ENCODE measurements at regions of chr5 and their contacts with region 1.

Region 1: DNA sequence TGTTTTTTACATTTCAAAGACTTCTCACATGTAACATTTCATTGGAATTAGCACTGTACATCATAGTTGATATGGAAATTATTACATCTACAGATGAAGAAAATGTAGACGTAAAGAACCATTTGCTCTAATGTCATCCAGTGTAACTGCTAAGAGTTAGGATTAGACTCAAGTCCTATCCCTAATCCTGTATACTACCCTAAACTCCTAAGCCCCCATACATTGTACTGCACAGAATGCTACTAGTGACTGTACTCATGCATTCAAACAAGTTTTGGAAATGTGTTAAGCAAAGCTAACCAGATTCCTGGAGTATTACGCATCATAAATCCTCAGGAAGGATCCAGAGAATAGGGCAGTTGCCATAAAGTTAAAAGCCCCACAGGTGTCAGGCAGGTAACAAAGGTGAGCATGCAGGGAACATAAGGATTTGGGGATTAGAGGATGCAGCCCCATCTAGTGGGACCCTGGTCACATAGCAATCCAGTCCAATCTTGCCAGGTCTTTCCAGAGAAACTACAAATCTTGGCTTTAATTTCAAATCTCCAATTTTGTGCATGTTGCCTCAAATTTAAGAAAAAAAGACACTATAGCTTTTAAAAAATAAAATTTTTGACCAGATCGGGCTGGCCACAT is 32.0 kb downstream of the HAVCR1 start:
- DNase-seq: peak; percentile 33 to 39
- H3K4me3 ChIP-seq: no peak overlapping the region
- H3K27ac ChIP-seq: no peak overlapping the region
- H3K4me1 ChIP-seq: no peaks in the 10 kb centered on the region
- H3K27me3 ChIP-seq: peaks cover 15% of the 10 kb centered on the region
- CTCF ChIP-seq: peak; percentile 72

Region 2: DNA sequence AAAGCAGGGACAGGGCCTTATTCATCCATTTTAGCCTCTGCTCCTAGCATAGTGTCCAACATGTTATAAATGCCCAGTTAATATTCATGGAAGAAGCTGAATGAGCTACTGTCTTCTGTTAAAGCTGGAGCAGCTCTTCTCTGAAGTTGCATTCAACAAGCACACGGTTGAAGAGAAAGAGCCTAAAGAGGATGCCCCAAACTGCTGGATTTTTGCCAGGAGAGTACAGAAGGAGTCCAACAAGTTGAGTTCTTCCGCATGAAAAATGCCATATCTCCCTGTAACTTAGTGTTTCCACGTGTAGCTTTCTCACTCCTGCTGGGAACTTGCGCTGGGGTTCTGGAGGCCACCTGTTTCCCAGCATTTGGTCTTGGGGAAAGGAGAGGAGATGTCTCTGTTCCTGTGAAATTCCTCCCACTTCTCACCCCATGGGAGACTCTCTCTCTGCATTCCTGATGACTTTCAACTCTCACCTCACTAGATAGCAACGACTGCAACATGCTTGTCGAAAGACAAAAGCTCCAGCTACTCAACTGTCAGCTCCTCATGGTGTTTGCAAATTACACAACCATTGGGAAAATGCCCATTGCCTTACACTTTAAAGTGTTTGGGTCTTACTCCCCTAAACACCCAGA is 1890.6 kb before region 1 on chr5:
- CTCF ChIA-PET with region 1: no interaction called
- POLR2A ChIA-PET with region 1: no interaction called
- intact Hi-C with region 1: loop called (anchors 5 kb)
- DNase-seq: no peak
- H3K4me3 ChIP-seq: no peak overlapping the region
- H3K27ac ChIP-seq: no peak overlapping the region
- H3K4me1 ChIP-seq: no peaks in the 10 kb centered on the region
- H3K27me3 ChIP-seq: peaks cover 8% of the 10 kb centered on the region
- CTCF ChIP-seq: no peak

Region 3: DNA sequence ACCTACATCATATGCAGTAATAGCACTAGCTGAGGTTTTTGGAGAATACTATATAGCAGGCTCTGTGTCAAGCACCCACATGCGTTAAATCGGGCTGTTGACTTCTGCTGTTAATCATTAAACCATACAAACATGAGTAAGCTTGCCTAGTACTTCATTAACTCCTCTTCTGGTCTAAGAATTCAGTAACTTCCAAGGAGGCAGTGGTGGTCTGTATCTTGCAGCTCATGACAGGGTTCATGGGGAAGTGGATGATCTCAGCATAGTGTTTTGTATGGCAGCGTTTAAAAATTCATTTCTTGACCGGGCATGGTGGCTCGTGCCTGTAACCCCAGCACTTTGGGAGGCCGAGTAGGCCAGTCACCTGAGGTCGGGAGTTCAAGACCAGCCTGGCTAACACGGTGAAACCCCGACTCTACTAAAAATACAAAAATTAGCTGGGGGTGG is 32.2 kb after region 1 on chr5 and contains the start of gene HAVCR1:
- CTCF ChIA-PET with region 1: no interaction called
- POLR2A ChIA-PET with region 1: no interaction called
- intact Hi-C with region 1: no loop called
- DNase-seq: no peak
- H3K4me3 ChIP-seq: no peak within 1 kb of the TSS
- H3K27ac ChIP-seq: no peak within 1 kb of the TSS
- H3K4me1 ChIP-seq: peaks cover 26% of the 10 kb centered on the region
- H3K27me3 ChIP-seq: no peaks in the 10 kb centered on the region
- CTCF ChIP-seq: no peak
- total RNA-seq, gene HAVCR1: not detected in 2 replicates